ENCODE measurements at regions of chr4 and their contacts with region 1.

Region 1: GRCh38 chr4:149370785-149371420 is 444.7 kb downstream of the IQCM start:
- DNase-seq: peak; percentile 10
- H3K4me3 ChIP-seq: no peak overlapping the region
- H3K27ac ChIP-seq: no peak overlapping the region
- H3K4me1 ChIP-seq: peaks cover 0 to 8% (median 0%) of the 10 kb centered on the region in 4 donors
- H3K27me3 ChIP-seq: no peaks in the 10 kb centered on the region
- CTCF ChIP-seq: peak in 4 of 5 experiments; percentile 12 to 35 (median 31)
- EP300 ChIP-seq: no peak
- POLR2A ChIP-seq: no peak

Region 2: GRCh38 chr4:149690726-149691125 is 319.8 kb after region 1 on chr4:
- in situ Hi-C with region 1: no loop called
- intact Hi-C with region 1: no loop called
- DNase-seq: no peak
- H3K4me3 ChIP-seq: no peak overlapping the region
- H3K27ac ChIP-seq: no peak overlapping the region
- H3K4me1 ChIP-seq: no peaks in the 10 kb centered on the region
- H3K27me3 ChIP-seq: no peaks in the 10 kb centered on the region
- CTCF ChIP-seq: no peak
- EP300 ChIP-seq: no peak
- POLR2A ChIP-seq: no peak

Region 3: GRCh38 chr4:149823770-149824221 is 452.9 kb after region 1 on chr4:
- in situ Hi-C with region 1: no loop called
- intact Hi-C with region 1: no loop called
- DNase-seq: no peak
- H3K4me3 ChIP-seq: no peak overlapping the region
- H3K27ac ChIP-seq: no peak overlapping the region
- H3K4me1 ChIP-seq: no peaks in the 10 kb centered on the region
- H3K27me3 ChIP-seq: no peaks in the 10 kb centered on the region
- CTCF ChIP-seq: no peak
- EP300 ChIP-seq: no peak
- POLR2A ChIP-seq: no peak

Region 4: GRCh38 chr4:149891426-149891825 is 520.5 kb after region 1 on chr4:
- in situ Hi-C with region 1: loop called in 3 of 4 experiments (anchors 5 to 25 kb)
- intact Hi-C with region 1: no loop called
- DNase-seq: no peak
- H3K4me3 ChIP-seq: no peak overlapping the region
- H3K27ac ChIP-seq: no peak overlapping the region
- H3K4me1 ChIP-seq: peaks cover 0 to under 1% (median 0%) of the 10 kb centered on the region in 4 donors
- H3K27me3 ChIP-seq: no peaks in the 10 kb centered on the region
- CTCF ChIP-seq: no peak
- EP300 ChIP-seq: no peak
- POLR2A ChIP-seq: no peak

Region 5: GRCh38 chr4:149897783-149898182 is 526.9 kb after region 1 on chr4:
- in situ Hi-C with region 1: loop called in 3 of 4 experiments (anchors 5 to 25 kb)
- intact Hi-C with region 1: no loop called
- DNase-seq: no peak
- H3K4me3 ChIP-seq: no peak overlapping the region
- H3K27ac ChIP-seq: peak overlapping the region in 1 of 4 donors; percentile 82
- H3K4me1 ChIP-seq: peaks cover 0 to 47% (median 12%) of the 10 kb centered on the region in 4 donors
- H3K27me3 ChIP-seq: no peaks in the 10 kb centered on the region
- CTCF ChIP-seq: peak in 4 of 5 experiments; percentile 36 to 48 (median 42)
- EP300 ChIP-seq: no peak
- POLR2A ChIP-seq: no peak

Measured in transverse colon (tissue), 4 donors.